IMR-90 (cell line): ENCODE measurements at regions of chr4 and their contacts with region 1.

Region 1: DNA sequence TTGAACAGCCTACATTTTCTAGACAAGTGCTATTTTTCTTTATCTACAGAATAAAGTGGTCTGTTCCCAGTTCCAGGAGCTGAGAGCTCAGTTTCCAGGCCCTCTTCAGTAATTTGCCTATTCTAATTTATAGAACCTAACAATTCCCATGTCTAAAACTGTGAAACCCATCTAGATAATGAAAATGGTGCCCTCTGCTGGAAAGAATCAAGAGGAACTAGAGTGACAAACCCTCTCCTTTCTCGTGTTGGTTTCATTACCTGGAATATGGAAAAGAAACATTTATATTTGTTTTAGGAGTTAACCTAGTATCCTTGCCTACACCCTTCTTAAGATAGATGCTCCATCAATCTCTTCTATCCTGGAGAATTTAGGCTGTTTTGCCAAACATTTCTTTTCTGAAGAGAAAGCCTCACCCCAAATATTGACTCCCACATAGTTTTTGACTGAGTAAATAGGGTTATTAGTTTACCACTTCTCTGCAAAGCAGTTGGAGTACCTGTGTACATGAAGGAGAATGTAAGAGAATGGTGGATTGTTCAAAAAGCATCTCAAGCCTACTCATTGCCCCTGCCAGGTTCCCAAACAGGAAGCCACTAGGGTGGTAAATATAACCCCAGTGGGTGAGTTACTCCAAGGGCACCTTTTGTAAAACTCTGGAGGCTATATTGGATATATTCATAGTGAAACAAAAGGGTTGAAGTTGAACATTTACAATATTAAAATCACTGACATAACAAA is 121.6 kb downstream of the RASL11B start:
- DNase-seq: peak; percentile 68
- ATAC-seq: peak; percentile 52; the same call in 1 of the 2 replicates
- H3K4me3 ChIP-seq: no peak overlapping the region
- H3K27ac ChIP-seq: no peak overlapping the region
- H3K4me1 ChIP-seq: peaks cover 1% of the 10 kb centered on the region
- H3K27me3 ChIP-seq: no peaks in the 10 kb centered on the region
- CTCF ChIP-seq: peak; percentile 71
- POLR2A ChIP-seq: no peak
- RAD21 ChIP-seq: peak; percentile 68

Region 2: GRCh38 chr4:52106660-52107059 is 877.1 kb before region 1 on chr4:
- CTCF ChIA-PET with region 1: no interaction called
- POLR2A ChIA-PET with region 1: no interaction called
- dilution Hi-C with region 1: no loop called
- in situ Hi-C with region 1: no loop called
- intact Hi-C with region 1: loop called (anchors 5 kb)
- DNase-seq: no peak
- ATAC-seq: peak; percentile 32; the same call in 1 of the 2 replicates
- H3K4me3 ChIP-seq: no peak overlapping the region
- H3K27ac ChIP-seq: no peak overlapping the region
- H3K4me1 ChIP-seq: no peaks in the 10 kb centered on the region
- H3K27me3 ChIP-seq: peaks cover 8% of the 10 kb centered on the region
- CTCF ChIP-seq: no peak
- POLR2A ChIP-seq: no peak
- RAD21 ChIP-seq: no peak

Region 3: GRCh38 chr4:52376132-52376704 is 607.5 kb before region 1 on chr4:
- CTCF ChIA-PET with region 1: interaction called, 4 read pairs
- POLR2A ChIA-PET with region 1: no interaction called
- dilution Hi-C with region 1: no loop called
- in situ Hi-C with region 1: loop called (anchors 5 kb)
- intact Hi-C with region 1: loop called (anchors 1 kb)
- DNase-seq: peak; percentile 47
- ATAC-seq: peak; percentile 48
- H3K4me3 ChIP-seq: no peak overlapping the region
- H3K27ac ChIP-seq: no peak overlapping the region
- H3K4me1 ChIP-seq: no peaks in the 10 kb centered on the region
- H3K27me3 ChIP-seq: peaks cover 9% of the 10 kb centered on the region
- CTCF ChIP-seq: peak; percentile 66
- POLR2A ChIP-seq: no peak
- RAD21 ChIP-seq: peak; percentile 69

Region 4: DNA sequence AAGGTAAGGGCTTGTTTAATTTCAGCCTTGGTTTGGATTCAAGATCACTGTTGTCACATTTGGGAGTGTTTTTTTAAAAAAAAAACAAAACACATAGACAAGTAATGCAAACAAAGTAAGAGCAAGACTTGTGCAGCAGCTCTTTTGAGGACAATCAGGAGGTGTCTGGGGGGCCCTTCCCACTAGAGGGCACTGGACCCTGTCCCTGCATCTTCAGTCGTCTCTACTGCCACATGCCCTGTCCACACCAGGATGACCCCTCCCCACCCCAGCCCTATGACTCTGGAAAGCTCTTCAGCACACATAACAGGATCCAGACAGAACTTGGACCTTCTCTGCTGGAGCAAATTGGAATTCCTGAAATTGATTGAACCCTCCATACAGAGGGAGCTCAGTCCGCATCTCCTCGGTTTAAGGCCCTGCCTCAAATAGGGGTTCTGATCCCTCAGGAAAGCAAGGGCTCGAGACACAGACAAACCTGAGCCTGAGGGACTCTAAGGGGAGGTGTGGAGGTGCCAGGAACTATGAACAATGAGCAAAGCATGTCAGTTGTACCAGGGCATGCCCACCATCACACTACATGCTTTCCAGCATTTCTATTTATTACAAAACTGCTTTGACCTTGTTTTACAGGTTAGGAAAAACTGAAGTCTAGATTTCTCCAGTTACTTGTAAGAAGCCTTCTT is 395.5 kb before region 1 on chr4:
- CTCF ChIA-PET with region 1: interaction called, 4 read pairs
- POLR2A ChIA-PET with region 1: no interaction called
- dilution Hi-C with region 1: no loop called
- in situ Hi-C with region 1: no loop called
- intact Hi-C with region 1: loop called (anchors 2 kb)
- DNase-seq: peak; percentile 13
- ATAC-seq: peak; percentile 48
- H3K4me3 ChIP-seq: no peak overlapping the region
- H3K27ac ChIP-seq: no peak overlapping the region
- H3K4me1 ChIP-seq: peaks cover 14% of the 10 kb centered on the region
- H3K27me3 ChIP-seq: no peaks in the 10 kb centered on the region
- CTCF ChIP-seq: peak; percentile 42
- POLR2A ChIP-seq: peak; percentile 12; the same call in 1 of the 2 replicates
- RAD21 ChIP-seq: peak; percentile 45

Region 5: DNA sequence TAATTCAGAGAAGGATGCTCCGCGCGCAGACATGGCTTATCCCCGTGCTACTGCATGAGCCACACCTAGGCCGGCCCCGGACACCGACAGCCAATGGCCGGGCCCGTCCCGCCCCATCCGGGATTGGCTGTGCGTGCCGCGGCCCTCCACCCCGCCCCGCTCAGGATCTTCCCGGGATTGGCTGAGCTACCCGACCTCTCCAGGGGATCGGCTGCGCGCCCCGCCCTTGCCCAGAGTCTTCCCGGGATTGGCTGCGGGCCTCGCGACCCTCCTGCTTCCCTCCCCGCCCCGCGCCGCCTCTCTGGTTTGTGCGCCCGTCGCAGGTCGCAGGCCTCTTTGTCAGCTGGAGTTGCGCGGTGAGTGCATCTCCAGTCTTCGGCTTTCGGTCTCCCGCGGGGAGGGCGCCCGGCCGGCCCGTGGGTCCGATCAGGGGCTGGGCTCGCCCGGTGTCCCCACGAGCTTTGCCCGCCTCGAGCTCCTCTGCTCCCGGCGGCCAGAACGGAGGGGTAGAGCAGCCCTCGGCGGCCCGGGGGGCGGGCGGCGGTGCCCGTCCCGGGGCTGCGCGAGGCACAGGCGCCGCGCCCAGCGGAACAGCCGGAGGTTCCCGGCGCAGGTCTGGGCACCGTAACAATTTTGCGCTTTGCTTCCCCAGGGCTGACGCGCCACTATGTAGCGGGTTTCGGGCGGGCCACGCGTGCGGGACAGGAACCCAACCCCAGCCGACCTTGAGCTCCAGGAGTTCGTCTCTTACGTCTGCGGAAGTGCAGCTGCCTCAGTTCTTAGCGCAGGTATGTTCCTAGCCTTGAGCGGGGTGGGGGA is 271.4 kb before region 1 on chr4:
- CTCF ChIA-PET with region 1: interaction called, 3 read pairs
- POLR2A ChIA-PET with region 1: no interaction called
- dilution Hi-C with region 1: no loop called
- in situ Hi-C with region 1: no loop called
- intact Hi-C with region 1: loop called (anchors 1 kb)
- DNase-seq: peak; percentile 93
- ATAC-seq: peak; percentile 99
- H3K4me3 ChIP-seq: peak overlapping the region; percentile 68
- H3K27ac ChIP-seq: peak overlapping the region; percentile 74
- H3K4me1 ChIP-seq: no peaks in the 10 kb centered on the region
- H3K27me3 ChIP-seq: no peaks in the 10 kb centered on the region; the same call in 1 of the 2 replicates
- CTCF ChIP-seq: no peak
- POLR2A ChIP-seq: peak; percentile 89
- RAD21 ChIP-seq: no peak

Region 6: GRCh38 chr4:52861879-52862616 is 121.7 kb before region 1 on chr4 and contains the start of gene RASL11B:
- CTCF ChIA-PET with region 1: no interaction called
- POLR2A ChIA-PET with region 1: no interaction called
- dilution Hi-C with region 1: no loop called
- in situ Hi-C with region 1: no loop called
- intact Hi-C with region 1: loop called (anchors 2 kb)
- DNase-seq: peak; percentile 52
- ATAC-seq: peak; percentile 98
- H3K4me3 ChIP-seq: peak within 1 kb of the TSS; percentile 89
- H3K27ac ChIP-seq: peak within 1 kb of the TSS; percentile 55; the same call in 1 of the 2 replicates
- H3K4me1 ChIP-seq: peaks cover 9% of the 10 kb centered on the region
- H3K27me3 ChIP-seq: peaks cover 8% of the 10 kb centered on the region
- CTCF ChIP-seq: no peak; the same call in 1 of the 2 replicates
- POLR2A ChIP-seq: no peak; the same call in 1 of the 2 replicates
- RAD21 ChIP-seq: no peak
- total RNA-seq, gene RASL11B: 0.18 and 0.28 TPM in 2 replicates